ENCODE measurements at regions of chr12 and their contacts with region 1.

Region 1: GRCh38 chr12:9760699-9761418 is at the start of gene CD69:
- DNase-seq: peak; percentile 91
- H3K4me3 Mint-ChIP-seq: peak within 1 kb of the TSS; percentile 99
- H3K27ac Mint-ChIP-seq: peak within 1 kb of the TSS; percentile 97
- H3K4me1 Mint-ChIP-seq: peaks cover 51% of the 10 kb centered on the region
- H3K27me3 Mint-ChIP-seq: no peaks in the 10 kb centered on the region
- total RNA-seq, gene CD69: 71.6 to 82.4 TPM

Region 2: GRCh38 chr12:9647825-9648700 is 112.8 kb before region 1 on chr12:
- CTCF ChIA-PET with region 1: interaction called, 4 read pairs
- POLR2A ChIA-PET with region 1: interaction called, 22 read pairs
- DNase-seq: peak; percentile 96
- H3K4me3 Mint-ChIP-seq: peak overlapping the region; percentile 93
- H3K27ac Mint-ChIP-seq: peak overlapping the region; percentile 96
- H3K4me1 Mint-ChIP-seq: peaks cover 59% of the 10 kb centered on the region
- H3K27me3 Mint-ChIP-seq: peaks cover 2% of the 10 kb centered on the region

Region 3: GRCh38 chr12:9673404-9674225 is 87.2 kb before region 1 on chr12:
- CTCF ChIA-PET with region 1: interaction called, 3 read pairs
- POLR2A ChIA-PET with region 1: interaction called, 26 read pairs
- DNase-seq: peak; percentile 58
- H3K4me3 Mint-ChIP-seq: peak overlapping the region; percentile 84
- H3K27ac Mint-ChIP-seq: peak overlapping the region; percentile 98
- H3K4me1 Mint-ChIP-seq: peaks cover 56% of the 10 kb centered on the region
- H3K27me3 Mint-ChIP-seq: no peaks in the 10 kb centered on the region

Region 4: GRCh38 chr12:9741726-9742125 is 19.1 kb before region 1 on chr12:
- CTCF ChIA-PET with region 1: interaction called, 48 read pairs
- POLR2A ChIA-PET with region 1: interaction called, 5 read pairs
- DNase-seq: peak; percentile 89
- H3K4me3 Mint-ChIP-seq: peak overlapping the region; percentile 73
- H3K27ac Mint-ChIP-seq: peak overlapping the region; percentile 95
- H3K4me1 Mint-ChIP-seq: peaks cover 75% of the 10 kb centered on the region
- H3K27me3 Mint-ChIP-seq: no peaks in the 10 kb centered on the region

Region 5: DNA sequence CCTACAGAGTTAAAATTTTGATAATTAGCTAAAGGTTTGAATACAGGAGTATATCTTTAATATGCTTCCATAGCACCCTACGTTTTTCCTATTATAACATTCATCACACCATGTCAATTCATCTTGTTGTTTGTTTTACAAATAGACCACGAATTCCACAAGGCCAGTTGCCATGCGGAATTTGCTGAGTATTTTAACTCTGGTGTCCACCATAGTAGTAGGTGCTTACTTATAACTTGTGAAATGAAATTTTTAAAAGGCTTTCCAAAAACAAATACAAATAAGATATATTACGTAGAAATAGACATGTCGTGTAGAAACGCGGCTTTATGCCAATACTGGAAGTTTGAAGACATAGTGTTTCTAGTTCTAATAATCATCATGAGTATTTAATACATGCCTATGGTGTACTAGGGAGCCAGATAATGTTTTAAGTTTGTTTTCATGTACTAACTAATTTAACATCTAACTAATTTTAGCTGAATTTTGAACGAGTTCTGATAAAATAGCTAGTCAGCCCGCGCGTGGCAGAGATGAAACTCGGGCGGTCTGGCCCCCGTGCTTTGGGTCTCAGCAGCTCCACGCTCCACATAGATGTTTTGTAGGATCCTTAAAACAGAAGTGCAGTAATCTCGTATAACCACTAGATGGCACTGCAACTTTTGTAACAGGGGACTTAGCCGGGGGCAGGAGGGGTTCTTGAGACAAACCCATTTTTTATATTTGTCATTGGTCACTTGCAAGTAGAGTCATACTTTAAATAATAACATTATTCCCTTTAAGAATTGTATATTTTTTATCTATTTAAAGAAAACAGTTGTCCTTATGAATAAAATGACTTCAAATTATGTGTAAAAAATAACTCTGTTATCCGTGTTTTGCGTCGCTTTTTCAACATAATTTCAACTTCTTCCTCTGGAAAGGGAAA is 10.3 kb before region 1 on chr12:
- CTCF ChIA-PET with region 1: interaction called, 48 read pairs
- POLR2A ChIA-PET with region 1: interaction called, 5 read pairs
- DNase-seq: peak; percentile 74
- H3K4me3 Mint-ChIP-seq: peak overlapping the region; percentile 58
- H3K27ac Mint-ChIP-seq: peak overlapping the region; percentile 80
- H3K4me1 Mint-ChIP-seq: peaks cover 60% of the 10 kb centered on the region
- H3K27me3 Mint-ChIP-seq: no peaks in the 10 kb centered on the region

Region 6: GRCh38 chr12:9797722-9798619 is 37.1 kb after region 1 on chr12:
- CTCF ChIA-PET with region 1: interaction called, 55 read pairs
- POLR2A ChIA-PET with region 1: interaction called, 125 read pairs
- DNase-seq: peak; percentile 85
- H3K4me3 Mint-ChIP-seq: peak overlapping the region; percentile 65
- H3K27ac Mint-ChIP-seq: peak overlapping the region; percentile 88
- H3K4me1 Mint-ChIP-seq: peaks cover 46% of the 10 kb centered on the region
- H3K27me3 Mint-ChIP-seq: peaks cover 10% of the 10 kb centered on the region

Region 7: GRCh38 chr12:9858135-9858534 is 97.3 kb after region 1 on chr12:
- CTCF ChIA-PET with region 1: no interaction called
- POLR2A ChIA-PET with region 1: no interaction called
- DNase-seq: no peak
- H3K4me3 Mint-ChIP-seq: no peak overlapping the region
- H3K27ac Mint-ChIP-seq: no peak overlapping the region
- H3K4me1 Mint-ChIP-seq: peaks cover 28% of the 10 kb centered on the region
- H3K27me3 Mint-ChIP-seq: no peaks in the 10 kb centered on the region

Region 8: DNA sequence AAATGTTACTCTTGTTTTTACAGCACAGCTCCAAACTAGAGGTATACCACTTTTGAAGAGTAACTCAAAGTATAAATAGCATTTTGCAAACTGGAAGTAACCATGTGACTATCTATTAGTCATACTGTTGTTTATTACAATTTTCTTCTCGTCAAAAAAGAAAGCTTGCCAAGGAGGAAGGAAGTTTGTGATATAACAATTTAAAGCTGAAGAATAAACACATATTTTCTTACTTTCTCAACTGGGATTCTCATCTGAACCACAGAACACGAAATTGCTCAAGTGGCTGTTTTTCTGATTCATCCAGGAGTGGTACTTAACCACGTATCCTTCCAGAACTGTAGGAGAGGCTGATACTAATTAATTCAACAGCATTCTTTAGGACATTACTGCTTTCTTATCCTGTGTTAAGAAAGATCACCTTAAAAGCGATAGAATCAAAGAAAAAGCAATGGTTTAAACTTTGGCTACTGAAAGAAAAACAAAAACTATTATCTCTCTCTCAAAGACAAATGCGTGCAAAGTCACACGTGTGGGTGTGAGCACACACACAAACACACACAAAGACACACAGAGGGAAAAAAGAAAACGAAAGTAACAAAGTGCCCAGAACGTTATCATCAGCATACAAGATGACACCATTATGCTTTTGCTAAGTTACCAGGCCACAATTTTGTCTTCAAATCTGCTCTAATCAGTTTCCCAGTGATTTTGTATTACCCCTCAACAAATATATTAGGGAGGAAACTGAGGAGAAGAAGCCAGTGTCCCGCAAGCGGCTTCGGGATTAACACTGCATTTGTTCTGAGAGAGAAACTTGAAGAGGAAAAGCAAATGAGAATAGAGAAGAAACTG is 108.7 kb after region 1 on chr12 and contains the start of gene CLEC2B:
- CTCF ChIA-PET with region 1: no interaction called
- POLR2A ChIA-PET with region 1: interaction called, 11 read pairs
- DNase-seq: peak; percentile 54
- H3K4me3 Mint-ChIP-seq: peak within 1 kb of the TSS; percentile 91
- H3K27ac Mint-ChIP-seq: peak within 1 kb of the TSS; percentile 98
- H3K4me1 Mint-ChIP-seq: peaks cover 21% of the 10 kb centered on the region
- H3K27me3 Mint-ChIP-seq: no peaks in the 10 kb centered on the region
- total RNA-seq, gene CLEC2B: 53.7 to 61.4 TPM